A549 (cell line): ENCODE measurements at regions of chr10 and their contacts with region 1.

Region 1: GRCh38 chr10:84328418-84329195 is at the start of gene CCSER2:
- DNase-seq: peak; percentile 43 to 86
- ATAC-seq: peak; percentile 86 to 91
- H3K4me3 ChIP-seq: peak within 1 kb of the TSS; percentile 80
- H3K27ac ChIP-seq: peak within 1 kb of the TSS; percentile 88 to 99
- H3K4me1 ChIP-seq: peaks cover 23% of the 10 kb centered on the region
- CTCF ChIP-seq: no peak; the same call in 1 of the 3 replicates
- EP300 ChIP-seq: no peak
- POLR2A ChIP-seq: peak; percentile 85
- RAD21 ChIP-seq: no peak
- polyA plus RNA-seq, gene CCSER2: 26.4 and 28.2 TPM in 2 replicates

Region 2: DNA sequence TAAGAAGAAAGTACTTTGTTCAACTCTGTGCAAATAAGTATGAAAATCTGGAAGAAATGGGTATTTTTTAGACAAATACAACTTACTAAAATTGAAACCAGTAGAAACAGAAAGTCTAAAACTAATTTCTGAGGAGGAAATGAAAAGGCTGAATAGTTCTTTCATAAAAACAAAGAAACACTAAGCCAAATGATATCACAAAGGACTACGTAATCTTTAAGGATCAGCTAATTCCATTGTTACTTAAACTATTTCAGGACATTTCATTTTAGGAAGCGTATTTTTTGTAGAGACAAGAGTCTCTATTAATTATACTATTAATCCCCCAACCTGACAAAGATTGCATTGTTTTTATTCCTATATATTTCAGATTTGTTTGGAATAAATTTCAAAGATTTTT is 11.4 kb before region 1 on chr10:
- CTCF ChIA-PET with region 1: no interaction called
- POLR2A ChIA-PET with region 1: interaction called, 10 read pairs
- DNase-seq: no peak
- ATAC-seq: no peak
- H3K4me3 ChIP-seq: no peak overlapping the region
- H3K27ac ChIP-seq: no peak overlapping the region
- H3K4me1 ChIP-seq: no peaks in the 10 kb centered on the region
- CTCF ChIP-seq: no peak
- EP300 ChIP-seq: no peak
- POLR2A ChIP-seq: no peak
- RAD21 ChIP-seq: no peak